K562 (cell line): ENCODE measurements at regions of chr3 and their contacts with region 1.

Region 1: GRCh38 chr3:9590282-9590791 is 36.7 kb upstream of the LHFPL4 start:
- DNase-seq: peak in 1 of 4 experiments; percentile 21
- ATAC-seq: peak; percentile 53; the same call in 2 of the 3 replicates
- H3K4me3 ChIP-seq: no peak overlapping the region
- H3K27ac ChIP-seq: no peak overlapping the region
- H3K4me1 ChIP-seq: peaks cover 8 to 9% of the 10 kb centered on the region in 2 experiments; a peak in 3 of 5 replicates
- H3K27me3 ChIP-seq: peaks cover 9 to 11% of the 10 kb centered on the region in 2 experiments; a peak in 4 of 5 replicates
- CTCF ChIP-seq: no peak
- EP300 ChIP-seq: no peak; the same call in 1 of the 2 replicates
- POLR2A ChIP-seq: no peak
- RAD21 ChIP-seq: no peak

Region 2: GRCh38 chr3:9600597-9600996 is 10.3 kb after region 1 on chr3:
- CTCF ChIA-PET with region 1: no interaction called
- POLR2A ChIA-PET with region 1: no interaction called
- in situ Hi-C with region 1: no loop called
- intact Hi-C with region 1: no loop called
- DNase-seq: no peak
- ATAC-seq: no peak
- H3K4me3 ChIP-seq: no peak overlapping the region
- H3K27ac ChIP-seq: no peak overlapping the region
- H3K4me1 ChIP-seq: peaks cover 0 to 7% of the 10 kb centered on the region in 2 experiments; a peak in 2 of 5 replicates
- H3K27me3 ChIP-seq: peaks cover 3 to 13% of the 10 kb centered on the region in 2 experiments; a peak in 2 of 5 replicates
- CTCF ChIP-seq: no peak
- EP300 ChIP-seq: no peak
- POLR2A ChIP-seq: no peak
- RAD21 ChIP-seq: no peak

Region 3: GRCh38 chr3:9649791-9650521 is 59.6 kb after region 1 on chr3:
- CTCF ChIA-PET with region 1: no interaction called
- POLR2A ChIA-PET with region 1: interaction called, 3 read pairs
- in situ Hi-C with region 1: no loop called
- intact Hi-C with region 1: loop called (anchors 5 kb)
- DNase-seq: peak; percentile 34 to 49 (median 38)
- ATAC-seq: no peak
- H3K4me3 ChIP-seq: peak overlapping the region; percentile 95
- H3K27ac ChIP-seq: peak overlapping the region; percentile 72
- H3K4me1 ChIP-seq: peaks cover 13 to 23% of the 10 kb centered on the region in 2 experiments; a peak in 4 of 5 replicates
- H3K27me3 ChIP-seq: no peaks in the 10 kb centered on the region
- CTCF ChIP-seq: no peak
- EP300 ChIP-seq: no peak
- POLR2A ChIP-seq: no peak
- RAD21 ChIP-seq: no peak